ENCODE measurements at regions of chr2 and their contacts with region 1.

Region 1: DNA sequence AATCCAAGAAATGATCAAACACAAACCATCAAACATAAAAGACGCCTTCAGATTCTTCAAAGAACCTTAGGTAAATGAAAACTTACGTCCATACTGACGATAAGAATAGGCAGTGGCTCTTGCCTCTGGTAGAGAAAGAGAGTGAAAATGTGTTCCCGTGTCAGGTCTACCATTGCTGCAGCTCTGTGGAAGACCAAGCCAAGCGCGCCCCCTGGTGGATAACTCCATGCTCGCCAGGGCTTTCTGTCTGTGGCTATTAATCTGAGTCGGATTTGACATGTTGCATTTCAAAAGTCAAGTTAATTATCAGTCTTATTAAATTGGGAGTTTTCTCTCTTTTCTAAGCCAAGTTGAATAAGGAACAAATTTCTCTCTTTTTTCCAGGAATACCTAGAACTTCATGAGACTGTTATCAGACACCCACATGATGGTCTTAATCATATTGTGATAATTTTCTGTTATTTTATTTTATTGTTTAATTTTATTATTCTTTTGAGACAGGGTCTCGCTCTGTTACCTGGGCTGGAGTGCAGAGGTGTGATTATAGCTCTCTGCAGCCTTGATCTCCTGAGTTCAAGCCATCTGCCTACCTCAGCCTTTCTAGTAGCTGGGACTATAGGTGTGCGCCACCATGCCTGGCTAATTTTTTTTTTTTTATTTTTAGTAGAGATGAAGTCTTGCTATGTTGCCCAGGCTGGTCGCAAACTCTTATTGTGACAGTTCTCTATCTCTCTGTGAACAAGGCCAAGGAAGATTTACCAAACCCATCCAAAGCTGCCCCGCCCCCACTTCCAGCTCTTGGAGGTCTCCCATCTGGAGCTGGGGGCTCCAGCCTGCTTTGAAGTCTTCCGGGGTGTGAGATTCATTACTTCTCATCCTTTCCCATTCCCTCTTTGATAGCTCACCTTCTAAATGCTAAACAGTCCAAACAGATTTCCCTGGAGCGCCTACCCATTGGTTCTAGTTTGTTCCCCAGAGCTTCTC is 15.8 kb upstream of the ZAP70 start:
- DNase-seq: peak; percentile 50
- H3K4me3 ChIP-seq: no peak overlapping the region
- H3K27ac ChIP-seq: no peak overlapping the region
- H3K27me3 ChIP-seq: no peaks in the 10 kb centered on the region
- CTCF ChIP-seq: peak; percentile 95

Region 2: DNA sequence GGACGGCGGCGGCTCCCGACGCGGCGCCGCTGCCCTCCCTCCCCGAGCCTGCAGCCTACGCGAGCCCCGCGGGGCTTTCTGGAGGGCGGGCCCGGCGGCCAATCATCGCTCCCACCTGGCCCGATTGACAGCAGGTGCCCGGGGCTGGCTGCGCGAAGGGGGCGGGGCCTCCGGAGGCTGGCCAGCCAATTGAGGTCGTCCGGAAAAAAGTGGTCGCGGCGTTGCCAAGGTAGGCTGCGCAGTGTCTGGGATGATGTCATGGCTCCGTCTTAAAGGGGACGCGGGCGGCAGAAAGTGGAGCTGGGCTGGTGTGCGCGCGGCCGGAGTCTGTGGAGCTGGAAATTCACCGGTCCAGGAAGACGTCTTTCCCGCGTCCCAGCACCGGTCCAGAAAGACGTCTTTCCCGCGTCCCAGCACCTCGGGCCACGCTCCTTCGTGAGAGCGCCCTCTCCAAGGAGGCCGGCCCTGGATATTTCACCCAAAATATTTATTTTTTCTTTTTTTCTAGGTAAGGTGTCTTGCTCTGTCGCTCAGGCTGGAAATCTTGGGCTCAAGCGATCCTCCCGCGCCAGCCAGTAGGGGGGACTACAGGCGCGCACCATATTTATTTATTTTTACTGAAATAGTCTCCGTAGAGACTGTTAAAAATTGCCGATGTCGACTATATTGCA is 33.4 kb before region 1 on chr2 and contains the start of gene ACTR1B:
- CTCF ChIA-PET with region 1: interaction called, 32 read pairs
- POLR2A ChIA-PET with region 1: interaction called, 3 read pairs
- DNase-seq: peak; percentile 95
- H3K4me3 ChIP-seq: peak within 1 kb of the TSS; percentile 79
- H3K27ac ChIP-seq: peak within 1 kb of the TSS; percentile 94
- H3K27me3 ChIP-seq: no peaks in the 10 kb centered on the region
- CTCF ChIP-seq: peak; percentile 68
- polyA plus RNA-seq, gene ACTR1B: 26.4 and 37.6 TPM in 2 replicates

Region 3: GRCh38 chr2:97740590-97741182 is 43.1 kb after region 1 on chr2:
- CTCF ChIA-PET with region 1: interaction called, 12 read pairs
- POLR2A ChIA-PET with region 1: interaction called, 3 read pairs
- DNase-seq: no peak
- H3K4me3 ChIP-seq: no peak overlapping the region
- H3K27ac ChIP-seq: no peak overlapping the region
- H3K27me3 ChIP-seq: peaks cover 2% of the 10 kb centered on the region
- CTCF ChIP-seq: peak; percentile 80

Region 4: DNA sequence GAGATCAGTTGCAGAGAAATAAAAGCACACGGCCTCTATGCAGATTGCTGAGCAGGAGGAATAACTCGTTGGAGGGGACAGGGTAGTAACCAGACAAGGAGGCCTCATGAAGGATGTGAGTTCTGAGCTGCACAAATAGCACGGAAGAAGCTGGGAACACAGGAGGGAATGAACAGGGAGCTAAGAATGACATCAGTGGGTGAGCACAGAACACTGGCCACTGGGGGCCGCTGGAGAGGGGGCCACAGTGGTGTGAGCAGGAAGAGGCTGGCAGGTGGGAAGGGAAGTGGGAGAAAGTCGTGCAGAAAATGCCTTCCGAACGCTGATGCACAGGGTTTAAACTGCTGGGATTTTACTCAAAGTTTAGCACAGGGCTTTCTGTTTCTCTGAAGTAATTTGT is 76.9 kb after region 1 on chr2:
- CTCF ChIA-PET with region 1: interaction called, 14 read pairs
- POLR2A ChIA-PET with region 1: no interaction called
- DNase-seq: no peak
- H3K4me3 ChIP-seq: no peak overlapping the region
- H3K27ac ChIP-seq: no peak overlapping the region
- H3K27me3 ChIP-seq: no peaks in the 10 kb centered on the region
- CTCF ChIP-seq: peak; percentile 54

Region 5: DNA sequence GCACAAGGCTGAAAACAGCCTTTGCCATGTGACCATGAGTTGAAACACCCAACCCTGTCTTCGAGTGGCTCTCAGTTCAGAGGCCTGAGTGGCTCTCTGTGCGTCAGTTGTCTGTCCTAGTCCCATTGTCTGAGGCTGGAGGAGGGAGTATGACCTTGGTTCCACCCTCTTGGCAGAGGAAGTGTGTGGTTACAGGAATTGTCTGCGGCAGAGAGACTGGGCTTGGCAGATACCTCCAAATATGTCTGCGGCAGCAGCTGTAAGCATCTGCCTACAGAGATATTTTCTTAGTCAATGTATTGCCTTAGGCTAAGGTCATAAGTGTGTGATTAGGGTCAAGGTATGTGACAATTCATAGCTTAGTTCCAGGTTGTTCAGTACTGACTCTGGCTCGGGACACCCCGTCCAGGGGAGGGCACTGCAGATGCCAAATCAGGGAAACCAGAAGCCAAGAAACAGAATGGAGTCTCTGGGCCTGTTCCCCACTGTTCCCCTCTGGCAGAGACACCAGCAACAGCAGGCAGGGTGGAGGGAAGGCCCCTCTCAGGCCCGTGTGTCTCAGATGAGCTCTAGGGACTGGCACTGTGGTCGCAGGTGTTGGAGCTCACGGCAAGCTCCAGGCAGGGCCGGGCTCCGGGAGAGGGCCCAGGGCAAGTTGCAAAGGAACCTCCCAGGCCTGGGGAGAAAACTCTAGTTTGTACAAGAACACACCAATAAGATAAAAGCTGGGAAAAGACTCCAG is 681.6 kb after region 1 on chr2:
- CTCF ChIA-PET with region 1: interaction called, 107 read pairs
- POLR2A ChIA-PET with region 1: no interaction called
- DNase-seq: no peak
- H3K4me3 ChIP-seq: no peak overlapping the region
- H3K27ac ChIP-seq: no peak overlapping the region
- H3K27me3 ChIP-seq: peaks cover 23% of the 10 kb centered on the region
- CTCF ChIP-seq: no peak

Measured in AG04450 (cell line).